Mammary epithelial cell (primary cell): ENCODE measurements at regions of chr9 and their contacts with region 1.

Region 1: GRCh38 chr9:33473643-33474352 is at the start of gene NOL6:
- DNase-seq: peak; percentile 99
- H3K4me3 ChIP-seq: peak within 1 kb of the TSS; percentile 80 to 96 (median 93)
- H3K27ac ChIP-seq: peak within 1 kb of the TSS; percentile 65
- H3K4me1 ChIP-seq: peaks cover 17% of the 10 kb centered on the region
- H3K27me3 ChIP-seq: no peaks in the 10 kb centered on the region
- CTCF ChIP-seq: no peak
- total RNA-seq, gene NOL6: 34.2 to 59.0 TPM

Region 2: DNA sequence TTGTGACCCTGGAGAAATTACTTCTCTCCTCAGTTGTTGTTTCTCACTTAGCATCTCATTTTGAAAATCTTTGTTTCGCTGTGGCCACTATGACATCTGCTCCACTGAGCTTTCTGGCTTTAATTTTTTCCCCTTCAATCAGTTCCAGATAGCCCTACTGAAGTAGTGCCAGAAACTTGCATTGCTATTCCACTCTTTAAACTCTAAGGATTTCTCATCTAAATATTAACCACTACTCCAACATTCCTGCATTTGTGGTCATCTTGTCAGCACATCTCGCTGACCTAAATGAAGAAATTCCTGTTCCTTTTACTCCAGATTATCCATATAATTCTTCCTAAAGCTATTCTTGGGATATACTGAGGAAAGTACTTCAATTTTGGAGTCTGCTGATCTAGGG is 15.3 kb after region 1 on chr9:
- CTCF ChIA-PET with region 1: no interaction called
- dilution Hi-C with region 1: no loop called
- in situ Hi-C with region 1: no loop called
- intact Hi-C with region 1: loop called (anchors 2 kb)
- DNase-seq: no peak
- H3K4me3 ChIP-seq: no peak overlapping the region
- H3K27ac ChIP-seq: no peak overlapping the region
- H3K4me1 ChIP-seq: no peaks in the 10 kb centered on the region
- H3K27me3 ChIP-seq: no peaks in the 10 kb centered on the region
- CTCF ChIP-seq: no peak

Region 3: DNA sequence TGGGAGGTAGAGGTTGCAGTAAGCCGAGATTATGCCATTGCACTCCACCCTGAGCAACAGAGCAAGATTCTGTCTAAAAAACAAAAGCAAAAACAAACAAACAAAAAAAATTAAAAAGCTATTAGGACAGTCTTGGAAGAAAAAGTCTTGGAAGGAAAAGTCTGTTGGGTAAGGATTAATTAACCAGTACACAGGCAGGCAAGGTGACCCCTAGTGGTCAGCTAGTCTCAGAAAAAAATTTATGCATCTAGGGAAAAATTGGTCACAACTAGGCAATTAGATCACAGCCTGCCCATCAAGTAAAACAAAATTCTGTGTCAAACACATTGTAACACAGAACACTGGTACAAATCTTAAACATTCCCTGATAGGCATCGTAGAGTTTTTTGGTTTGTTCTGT is 43.6 kb after region 1 on chr9:
- CTCF ChIA-PET with region 1: no interaction called
- dilution Hi-C with region 1: no loop called
- in situ Hi-C with region 1: no loop called
- intact Hi-C with region 1: loop called (anchors 1 kb)
- DNase-seq: peak; percentile 51
- H3K4me3 ChIP-seq: no peak overlapping the region
- H3K27ac ChIP-seq: no peak overlapping the region
- H3K4me1 ChIP-seq: peaks cover 20% of the 10 kb centered on the region
- H3K27me3 ChIP-seq: no peaks in the 10 kb centered on the region
- CTCF ChIP-seq: peak; percentile 38 to 62

Region 4: GRCh38 chr9:33721674-33722358 is 248.0 kb after region 1 on chr9:
- CTCF ChIA-PET with region 1: no interaction called
- dilution Hi-C with region 1: no loop called
- in situ Hi-C with region 1: no loop called
- intact Hi-C with region 1: loop called (anchors 2 kb)
- DNase-seq: peak; percentile 65
- H3K4me3 ChIP-seq: no peak overlapping the region
- H3K27ac ChIP-seq: no peak overlapping the region
- H3K4me1 ChIP-seq: no peaks in the 10 kb centered on the region
- H3K27me3 ChIP-seq: no peaks in the 10 kb centered on the region
- CTCF ChIP-seq: peak; percentile 99 to 100

Region 5: DNA sequence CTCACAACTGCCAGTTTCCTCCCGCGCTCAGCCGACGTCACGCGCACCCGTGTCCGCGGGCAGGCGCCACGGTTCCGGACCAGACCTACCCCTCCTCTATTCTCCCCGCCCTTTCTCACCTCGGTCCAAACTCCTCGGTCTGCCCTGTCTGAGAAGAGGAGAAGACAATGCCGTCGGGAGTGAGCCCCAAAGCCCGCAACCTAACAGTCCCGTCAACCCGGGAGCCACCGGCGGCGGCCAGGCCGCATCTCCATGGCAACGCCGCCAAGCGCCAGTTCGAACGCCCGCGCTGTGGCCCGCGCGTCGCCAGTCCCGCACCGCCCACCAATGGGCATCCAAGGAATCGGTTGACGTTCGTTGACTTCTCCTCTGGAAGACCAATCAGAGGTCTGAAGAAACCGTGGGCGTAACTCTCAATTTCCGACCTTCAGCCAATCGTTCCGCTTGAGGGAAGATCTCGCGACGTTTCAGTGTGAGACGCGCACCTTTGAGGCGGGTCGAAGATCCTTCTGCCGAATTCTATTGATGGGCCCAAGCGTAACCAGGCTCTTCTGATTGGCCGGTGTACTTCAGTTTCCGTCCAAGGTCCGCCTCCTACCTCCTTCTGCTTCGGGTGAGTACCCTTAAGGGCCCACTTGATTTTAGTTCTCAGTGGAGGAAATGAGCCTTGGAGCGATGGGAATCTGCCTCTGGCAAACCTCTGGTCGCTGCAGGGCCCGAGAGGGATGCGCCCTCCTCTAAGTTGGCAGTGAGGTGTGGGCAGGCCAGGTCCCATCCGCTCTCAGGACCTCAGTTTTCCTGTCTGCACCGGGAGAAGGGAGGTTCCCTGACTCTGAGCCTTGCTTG is 855.4 kb after region 1 on chr9 and contains the starts of genes KIF24 and NUDT2:
- CTCF ChIA-PET with region 1: no interaction called
- dilution Hi-C with region 1: no loop called
- in situ Hi-C with region 1: no loop called
- intact Hi-C with region 1: loop called (anchors 10 kb)
- DNase-seq: peak; percentile 100
- H3K4me3 ChIP-seq: peak within 1 kb of the TSS; percentile 85 to 89 (median 86)
- H3K27ac ChIP-seq: peak within 1 kb of the TSS; percentile 96
- H3K4me1 ChIP-seq: peaks cover 45% of the 10 kb centered on the region
- H3K27me3 ChIP-seq: no peaks in the 10 kb centered on the region
- CTCF ChIP-seq: no peak
- total RNA-seq, gene KIF24: 1.3 to 3.9 TPM
- total RNA-seq, gene NUDT2: 17.8 to 22.9 TPM